ENCODE measurements at regions of chr5 and their contacts with region 1.

Region 1: GRCh38 chr5:176639981-176640380 is 7.3 kb upstream of the TSPAN17 start:
- DNase-seq: no peak
- H3K4me3 ChIP-seq: no peak overlapping the region
- H3K27ac ChIP-seq: no peak overlapping the region
- H3K4me1 ChIP-seq: no peaks in the 10 kb centered on the region
- H3K27me3 ChIP-seq: no peaks in the 10 kb centered on the region
- CTCF ChIP-seq: no peak

Region 2: GRCh38 chr5:176653401-176654385 is 13.7 kb after region 1 on chr5:
- intact Hi-C with region 1: no loop called
- DNase-seq: no peak
- H3K4me3 ChIP-seq: no peak overlapping the region
- H3K27ac ChIP-seq: no peak overlapping the region
- H3K4me1 ChIP-seq: no peaks in the 10 kb centered on the region
- H3K27me3 ChIP-seq: no peaks in the 10 kb centered on the region
- CTCF ChIP-seq: no peak

Region 3: DNA sequence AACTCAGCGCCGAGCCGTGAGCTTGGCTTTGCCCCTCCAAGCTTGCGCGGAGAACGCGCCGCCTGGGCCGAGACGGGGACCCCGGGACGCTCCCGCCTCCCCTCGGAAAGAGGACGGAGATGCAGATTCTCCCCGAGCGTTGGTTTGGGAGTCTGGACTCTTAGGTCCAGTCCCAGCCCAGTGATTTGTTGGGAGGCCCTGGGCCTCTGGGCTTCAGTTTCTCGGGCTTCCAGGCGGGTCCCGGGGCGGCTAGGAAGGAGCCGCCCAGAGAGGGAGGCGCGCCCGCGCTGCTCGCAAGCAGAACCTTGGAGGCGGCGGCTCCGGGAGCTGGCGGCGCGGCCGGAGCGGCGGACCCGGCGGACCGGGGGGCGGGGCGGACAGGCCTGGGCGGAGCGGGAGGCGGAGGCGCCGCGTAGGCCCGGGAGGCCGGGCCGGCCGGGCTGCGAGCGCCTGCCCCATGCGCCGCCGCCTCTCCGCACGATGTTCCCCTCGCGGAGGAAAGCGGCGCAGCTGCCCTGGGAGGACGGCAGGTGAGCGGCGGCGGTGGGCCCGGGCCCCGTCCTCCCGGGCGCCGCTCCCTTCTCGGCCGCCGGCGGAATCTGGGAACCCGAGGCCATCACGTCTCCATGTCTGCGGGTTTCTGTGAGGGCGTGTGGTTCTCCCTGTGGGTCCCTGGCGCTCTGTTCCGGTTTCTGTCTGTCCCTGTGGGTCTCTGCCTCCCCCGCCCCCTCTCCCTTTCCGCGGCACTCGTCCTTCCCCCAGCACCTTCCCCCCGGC is 959.9 kb after region 1 on chr5 and contains the start of gene B4GALT7:
- intact Hi-C with region 1: loop called (anchors 5 kb)
- DNase-seq: peak in 1 of 2 donors; percentile 90
- H3K4me3 ChIP-seq: peak within 1 kb of the TSS; percentile 97 to 98
- H3K27ac ChIP-seq: peak within 1 kb of the TSS; percentile 84 to 92
- H3K4me1 ChIP-seq: peaks cover 8 to 12% of the 10 kb centered on the region in 2 donors
- H3K27me3 ChIP-seq: no peaks in the 10 kb centered on the region
- CTCF ChIP-seq: peak in 1 of 3 experiments; percentile 26
- total RNA-seq, gene B4GALT7: 25.7 TPM